RWPE1 (cell line): ENCODE measurements at regions of chr2 and their contacts with region 1.

Region 1: DNA sequence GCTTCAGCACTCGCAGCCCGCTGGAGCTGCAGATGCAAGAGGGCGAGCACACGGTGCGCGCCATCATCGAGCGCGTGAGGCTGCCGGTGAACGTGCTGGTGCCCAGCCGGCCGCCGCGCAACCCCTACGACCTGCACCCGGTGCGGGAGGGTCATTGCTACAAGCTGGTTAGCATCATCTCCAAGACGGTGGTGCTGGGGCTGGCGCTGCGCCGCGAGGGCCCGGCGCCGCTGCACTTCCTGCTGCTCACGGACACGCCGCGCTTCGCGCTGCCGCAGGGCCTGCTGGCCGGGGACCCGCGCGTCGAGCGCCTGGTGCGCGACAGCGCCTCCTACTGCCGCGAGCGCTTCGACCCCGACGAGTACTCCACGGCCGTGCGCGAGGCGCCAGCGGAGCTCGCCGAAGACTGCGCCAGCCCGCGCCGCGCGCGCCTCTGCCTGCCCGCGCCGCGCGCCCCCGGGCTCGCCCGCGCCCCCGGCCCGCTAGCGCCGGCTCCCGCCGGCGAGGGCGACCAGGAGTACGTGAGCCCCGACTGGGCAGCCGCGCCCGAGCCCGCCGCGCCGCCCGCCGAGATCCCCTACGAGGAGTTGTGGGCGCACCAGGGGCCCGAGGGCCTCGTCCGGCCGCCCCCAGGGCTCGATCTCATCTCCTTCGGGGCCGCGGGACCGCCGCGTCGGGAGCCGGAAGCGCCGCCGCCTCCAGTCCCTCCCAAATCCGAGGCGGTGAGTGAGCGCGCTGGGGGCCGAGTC is 11.8 kb downstream of the GAREM2 start:
- DNase-seq: peak; percentile 52
- H3K27ac ChIP-seq: peak overlapping the region; percentile 2; the same call in 1 of the 2 replicates
- CTCF ChIP-seq: peak; percentile 80

Region 2: GRCh38 chr2:26173776-26174482 is 10.8 kb before region 1 on chr2:
- CTCF ChIA-PET with region 1: interaction called, 12 read pairs
- POLR2A ChIA-PET with region 1: no interaction called
- DNase-seq: no peak
- H3K27ac ChIP-seq: no peak overlapping the region
- CTCF ChIP-seq: no peak

Region 3: GRCh38 chr2:26376799-26377198 is 192.1 kb after region 1 on chr2:
- CTCF ChIA-PET with region 1: no interaction called
- POLR2A ChIA-PET with region 1: no interaction called
- DNase-seq: no peak
- H3K27ac ChIP-seq: no peak overlapping the region
- CTCF ChIP-seq: no peak

Region 4: GRCh38 chr2:26469092-26469710 is 284.5 kb after region 1 on chr2:
- CTCF ChIA-PET with region 1: no interaction called
- POLR2A ChIA-PET with region 1: no interaction called
- DNase-seq: peak; percentile 33
- H3K27ac ChIP-seq: no peak overlapping the region
- CTCF ChIP-seq: peak; percentile 47